ENCODE measurements at regions of chr4 and their contacts with region 1.

Region 1: GRCh38 chr4:9691238-9692065 is 90.0 kb upstream of the DRD5 start:
- DNase-seq: peak; percentile 80 to 88 (median 86)
- ATAC-seq: peak; percentile 100
- H3K4me3 ChIP-seq: peak overlapping the region; percentile 61
- H3K4me3 Mint-ChIP-seq: peak overlapping the region; percentile 65 to 92 (median 86)
- H3K27ac ChIP-seq: peak overlapping the region; percentile 77
- H3K27ac Mint-ChIP-seq: peak overlapping the region; percentile 79 to 91 (median 83)
- H3K4me1 ChIP-seq: no peaks in the 10 kb centered on the region
- H3K4me1 Mint-ChIP-seq: peaks cover 9 to 26% (median 24%) of the 10 kb centered on the region in 7 donors
- H3K27me3 ChIP-seq: no peaks in the 10 kb centered on the region
- H3K27me3 Mint-ChIP-seq: peaks cover 0 to 9% (median 0%) of the 10 kb centered on the region in 5 donors

Region 2: GRCh38 chr4:8428293-8429097 is 1263.0 kb before region 1 on chr4:
- CTCF ChIA-PET with region 1: no interaction called
- POLR2A ChIA-PET with region 1: no interaction called
- intact Hi-C with region 1: loop called in 1 of 2 experiments (anchors 10 kb)
- DNase-seq: peak; percentile 81 to 99 (median 91)
- ATAC-seq: peak; percentile 99
- H3K4me3 ChIP-seq: peak overlapping the region; percentile 95
- H3K4me3 Mint-ChIP-seq: peak overlapping the region; percentile 85 to 98 (median 95)
- H3K27ac ChIP-seq: peak overlapping the region; percentile 84
- H3K27ac Mint-ChIP-seq: peak overlapping the region; percentile 69 to 94 (median 92)
- H3K4me1 ChIP-seq: peaks cover 13 to 17% of the 10 kb centered on the region in 2 donors
- H3K4me1 Mint-ChIP-seq: peaks cover 15 to 54% (median 48%) of the 10 kb centered on the region in 7 donors
- H3K27me3 ChIP-seq: no peaks in the 10 kb centered on the region
- H3K27me3 Mint-ChIP-seq: no peaks in the 10 kb centered on the region

Region 3: GRCh38 chr4:9608300-9608699 is 83.2 kb before region 1 on chr4:
- CTCF ChIA-PET with region 1: no interaction called
- POLR2A ChIA-PET with region 1: no interaction called
- intact Hi-C with region 1: loop called in 1 of 2 experiments (anchors 2 kb)
- DNase-seq: no peak
- ATAC-seq: no peak
- H3K4me3 ChIP-seq: no peak overlapping the region
- H3K4me3 Mint-ChIP-seq: no peak overlapping the region
- H3K27ac ChIP-seq: no peak overlapping the region
- H3K27ac Mint-ChIP-seq: no peak overlapping the region
- H3K4me1 ChIP-seq: peaks cover 8 to 9% of the 10 kb centered on the region in 2 donors
- H3K4me1 Mint-ChIP-seq: peaks cover 20 to 36% (median 29%) of the 10 kb centered on the region in 7 donors
- H3K27me3 ChIP-seq: no peaks in the 10 kb centered on the region
- H3K27me3 Mint-ChIP-seq: peaks cover 0 to 5% (median 0%) of the 10 kb centered on the region in 5 donors

Region 4: DNA sequence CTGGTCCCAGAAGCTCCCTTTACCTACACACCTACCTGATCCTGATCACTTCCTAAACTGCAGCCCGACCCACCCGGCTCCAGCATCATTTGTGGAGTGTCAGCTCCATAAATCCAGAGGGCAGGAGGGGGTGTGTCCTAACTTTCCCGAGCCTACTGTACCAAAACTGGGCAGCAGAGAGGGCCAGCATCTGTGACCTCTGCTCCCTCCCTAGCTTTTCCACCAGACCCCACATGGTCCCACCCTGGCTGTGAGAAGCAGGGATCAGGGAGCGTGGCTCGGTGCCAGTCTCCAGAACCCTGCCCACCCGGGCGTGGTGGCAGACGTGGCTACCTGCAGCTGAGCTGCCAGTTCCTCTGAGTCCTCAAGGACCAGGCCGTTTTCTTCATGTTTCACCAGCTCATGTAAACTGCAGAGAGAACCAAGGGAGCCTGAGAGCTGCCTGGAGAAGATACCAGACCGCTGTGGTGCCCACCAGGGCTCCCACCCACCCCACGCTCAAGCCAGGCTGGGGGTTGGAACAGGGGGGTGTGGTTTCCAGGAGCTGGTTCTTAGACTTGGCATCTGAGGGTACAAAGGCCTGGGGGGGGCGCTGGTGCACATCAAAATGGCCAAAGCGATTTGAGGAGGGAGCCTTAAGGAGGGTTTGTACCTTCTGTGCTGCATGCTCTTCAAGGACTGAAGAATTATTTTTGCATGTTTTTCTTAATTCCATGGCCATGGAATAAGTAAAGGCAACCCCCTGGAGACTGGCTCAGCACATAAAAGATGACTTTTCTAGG is 13.3 kb after region 1 on chr4:
- CTCF ChIA-PET with region 1: interaction called, 4 read pairs
- POLR2A ChIA-PET with region 1: no interaction called
- intact Hi-C with region 1: loop called in 1 of 2 experiments (anchors 1 kb)
- DNase-seq: no peak
- ATAC-seq: no peak
- H3K4me3 ChIP-seq: no peak overlapping the region
- H3K4me3 Mint-ChIP-seq: peak overlapping the region in 1 of 10 donors; percentile 30
- H3K27ac ChIP-seq: no peak overlapping the region
- H3K27ac Mint-ChIP-seq: no peak overlapping the region
- H3K4me1 ChIP-seq: no peaks in the 10 kb centered on the region
- H3K4me1 Mint-ChIP-seq: peaks cover 9 to 21% (median 11%) of the 10 kb centered on the region in 7 donors
- H3K27me3 ChIP-seq: no peaks in the 10 kb centered on the region
- H3K27me3 Mint-ChIP-seq: peaks cover 0 to 3% (median 0%) of the 10 kb centered on the region in 5 donors

Region 5: GRCh38 chr4:9745771-9746170 is 54.3 kb after region 1 on chr4:
- CTCF ChIA-PET with region 1: no interaction called
- POLR2A ChIA-PET with region 1: no interaction called
- intact Hi-C with region 1: no loop called
- DNase-seq: no peak
- ATAC-seq: peak; percentile 18
- H3K4me3 ChIP-seq: no peak overlapping the region
- H3K4me3 Mint-ChIP-seq: no peak overlapping the region
- H3K27ac ChIP-seq: no peak overlapping the region
- H3K27ac Mint-ChIP-seq: peak overlapping the region in 1 of 9 donors; percentile 12
- H3K4me1 ChIP-seq: no peaks in the 10 kb centered on the region
- H3K4me1 Mint-ChIP-seq: peaks cover 0 to 5% (median 0%) of the 10 kb centered on the region in 7 donors
- H3K27me3 ChIP-seq: no peaks in the 10 kb centered on the region
- H3K27me3 Mint-ChIP-seq: peaks cover 5 to 18% (median 11%) of the 10 kb centered on the region in 5 donors

Region 6: DNA sequence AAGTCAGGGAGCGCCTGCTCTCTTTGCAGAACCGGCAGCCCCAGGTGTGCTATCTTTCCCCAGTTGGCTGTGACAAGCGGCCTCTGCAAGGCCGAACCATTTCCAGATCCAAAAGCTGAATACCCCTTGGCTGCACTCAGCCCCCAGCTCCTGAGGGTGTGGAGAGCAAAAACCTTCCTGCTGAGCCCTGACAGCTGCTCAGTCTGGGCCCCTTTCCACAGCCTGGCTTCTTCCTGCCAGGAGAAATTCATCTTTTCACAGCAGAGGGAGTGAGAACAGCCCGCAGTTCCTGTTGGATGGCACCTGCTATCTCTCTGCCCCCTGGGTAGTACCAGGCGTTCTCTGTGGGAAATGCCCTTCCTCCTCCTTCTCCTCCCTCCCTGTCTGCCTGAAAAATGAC is 168.4 kb after region 1 on chr4:
- CTCF ChIA-PET with region 1: no interaction called
- POLR2A ChIA-PET with region 1: no interaction called
- intact Hi-C with region 1: no loop called
- DNase-seq: no peak
- ATAC-seq: no peak
- H3K4me3 ChIP-seq: no peak overlapping the region
- H3K4me3 Mint-ChIP-seq: no peak overlapping the region
- H3K27ac ChIP-seq: no peak overlapping the region
- H3K27ac Mint-ChIP-seq: peak overlapping the region in 1 of 9 donors; percentile 35
- H3K4me1 ChIP-seq: no peaks in the 10 kb centered on the region
- H3K4me1 Mint-ChIP-seq: no peaks in the 10 kb centered on the region
- H3K27me3 ChIP-seq: no peaks in the 10 kb centered on the region
- H3K27me3 Mint-ChIP-seq: peaks cover 0 to 1% (median 0%) of the 10 kb centered on the region in 5 donors

Region 7: GRCh38 chr4:10403633-10404445 is 712.4 kb after region 1 on chr4:
- CTCF ChIA-PET with region 1: no interaction called
- POLR2A ChIA-PET with region 1: no interaction called
- intact Hi-C with region 1: loop called in 1 of 2 experiments (anchors 5 kb)
- DNase-seq: peak in 5 of 9 donors; percentile 20 to 44 (median 34)
- ATAC-seq: peak; percentile 54
- H3K4me3 ChIP-seq: no peak overlapping the region
- H3K4me3 Mint-ChIP-seq: no peak overlapping the region
- H3K27ac ChIP-seq: no peak overlapping the region
- H3K27ac Mint-ChIP-seq: no peak overlapping the region
- H3K4me1 ChIP-seq: no peaks in the 10 kb centered on the region
- H3K4me1 Mint-ChIP-seq: no peaks in the 10 kb centered on the region
- H3K27me3 ChIP-seq: no peaks in the 10 kb centered on the region
- H3K27me3 Mint-ChIP-seq: no peaks in the 10 kb centered on the region

Region 8: GRCh38 chr4:10535912-10536311 is 844.5 kb after region 1 on chr4:
- CTCF ChIA-PET with region 1: no interaction called
- POLR2A ChIA-PET with region 1: no interaction called
- intact Hi-C with region 1: loop called in 1 of 2 experiments (anchors 5 kb)
- DNase-seq: no peak
- ATAC-seq: no peak
- H3K4me3 ChIP-seq: no peak overlapping the region
- H3K4me3 Mint-ChIP-seq: no peak overlapping the region
- H3K27ac ChIP-seq: no peak overlapping the region
- H3K27ac Mint-ChIP-seq: no peak overlapping the region
- H3K4me1 ChIP-seq: no peaks in the 10 kb centered on the region
- H3K4me1 Mint-ChIP-seq: no peaks in the 10 kb centered on the region
- H3K27me3 ChIP-seq: no peaks in the 10 kb centered on the region
- H3K27me3 Mint-ChIP-seq: peaks cover 0 to 7% (median 4%) of the 10 kb centered on the region in 5 donors